Activated CD4-positive, alpha-beta memory T cell treated with anti-CD3 and anti-CD28 coated beads for 36 hours (primary cell): ENCODE measurements at regions of chr1 and their contacts with region 1.

Region 1: GRCh38 chr1:78664763-78665162 is 15.1 kb downstream of the IFI44 start:
- DNase-seq: no peak
- H3K4me3 Mint-ChIP-seq: no peak overlapping the region
- H3K27ac Mint-ChIP-seq: no peak overlapping the region
- H3K4me1 Mint-ChIP-seq: no peaks in the 10 kb centered on the region
- H3K27me3 Mint-ChIP-seq: no peaks in the 10 kb centered on the region

Region 2: DNA sequence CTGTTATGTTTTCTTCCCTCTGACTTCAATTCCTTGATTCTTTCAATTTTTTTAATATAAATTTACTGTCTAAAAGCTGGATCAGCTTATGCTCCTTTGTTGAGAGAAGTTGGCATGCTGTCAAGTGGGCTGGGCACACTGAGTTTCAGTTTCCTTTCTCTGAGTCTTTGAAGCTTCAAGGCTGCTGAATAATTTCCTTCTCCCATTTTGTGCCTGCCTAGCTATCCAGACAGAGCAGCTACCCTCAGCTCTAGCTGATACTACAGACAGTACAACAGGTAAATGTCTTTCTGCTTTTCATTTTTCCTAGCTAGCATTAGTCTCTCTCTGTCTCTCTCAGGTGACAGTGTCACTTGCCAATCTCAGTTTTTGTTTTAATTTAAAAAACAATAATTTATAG is 15.1 kb before region 1 on chr1 and contains the start of gene IFI44:
- CTCF ChIA-PET with region 1: no interaction called
- POLR2A ChIA-PET with region 1: no interaction called
- intact Hi-C with region 1: loop called (anchors 1 kb)
- DNase-seq: peak; percentile 85
- H3K4me3 Mint-ChIP-seq: peak within 1 kb of the TSS; percentile 79
- H3K27ac Mint-ChIP-seq: peak within 1 kb of the TSS; percentile 76
- H3K4me1 Mint-ChIP-seq: peaks cover 57% of the 10 kb centered on the region
- H3K27me3 Mint-ChIP-seq: no peaks in the 10 kb centered on the region
- total RNA-seq, gene IFI44: 56.1 to 60.1 TPM